PC-9 (cell line): ENCODE measurements at regions of chr6 and their contacts with region 1.

Region 1: DNA sequence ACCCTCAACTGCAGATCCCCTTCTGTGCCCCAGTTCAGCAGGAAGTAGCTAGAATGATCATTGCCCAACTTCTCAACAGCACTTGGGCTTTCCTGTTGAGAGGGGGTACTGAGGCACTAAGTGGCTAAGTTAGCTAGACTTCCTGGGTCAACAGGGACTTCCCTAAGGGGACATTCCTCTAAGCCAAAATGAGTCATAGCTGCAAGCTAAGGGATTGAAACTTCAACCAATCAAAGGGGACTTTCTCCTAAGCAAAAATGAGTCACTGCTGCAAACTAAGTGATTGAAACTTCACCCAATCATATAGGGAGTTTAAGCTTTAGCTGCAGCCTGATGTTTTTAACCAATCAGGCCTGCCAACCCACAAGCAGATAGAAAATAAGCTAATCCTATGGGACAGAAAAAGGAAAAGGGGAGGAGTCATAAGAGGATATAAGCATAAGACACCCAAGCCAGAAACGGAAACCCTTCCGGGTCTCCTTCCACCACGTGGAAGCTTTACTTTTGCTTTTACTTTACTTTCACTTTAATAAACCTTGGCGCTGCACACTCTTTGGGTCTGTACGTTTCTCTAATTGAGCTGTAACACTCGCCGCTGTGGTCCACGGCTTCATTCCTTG is 659.0 kb upstream of the HS3ST5 start:
- DNase-seq: peak in 1 of 2 experiments; percentile 59
- H3K4me3 ChIP-seq: no peak overlapping the region
- H3K27ac ChIP-seq: no peak overlapping the region
- H3K4me1 ChIP-seq: peaks cover 27% of the 10 kb centered on the region
- H3K27me3 ChIP-seq: no peaks in the 10 kb centered on the region
- CTCF ChIP-seq: no peak

Region 2: DNA sequence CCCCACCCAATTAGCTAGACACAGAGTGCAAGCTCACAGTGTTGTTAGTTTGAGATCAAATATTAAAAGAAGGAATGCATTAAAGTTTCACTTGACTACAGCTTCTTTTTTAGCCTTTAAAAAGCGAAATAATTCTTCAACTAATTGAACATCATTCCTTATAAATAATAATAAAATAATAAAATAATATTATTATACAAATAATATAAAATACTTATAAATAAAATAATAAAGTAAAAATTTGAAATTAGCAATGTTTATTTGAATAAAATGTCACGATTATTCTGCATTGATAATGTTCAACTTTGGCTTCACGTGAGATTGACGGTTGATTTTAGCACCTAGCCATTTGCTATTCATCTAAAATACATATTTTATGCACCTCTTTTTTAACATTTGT is 239.5 kb after region 1 on chr6:
- CTCF ChIA-PET with region 1: no interaction called
- POLR2A ChIA-PET with region 1: no interaction called
- intact Hi-C with region 1: no loop called
- DNase-seq: no peak
- H3K4me3 ChIP-seq: no peak overlapping the region
- H3K27ac ChIP-seq: no peak overlapping the region
- H3K4me1 ChIP-seq: no peaks in the 10 kb centered on the region
- H3K27me3 ChIP-seq: no peaks in the 10 kb centered on the region
- CTCF ChIP-seq: no peak

Region 3: GRCh38 chr6:116060572-116061283 is 1058.9 kb after region 1 on chr6 and contains the start of gene FRK:
- CTCF ChIA-PET with region 1: no interaction called
- POLR2A ChIA-PET with region 1: no interaction called
- intact Hi-C with region 1: loop called (anchors 5 kb)
- DNase-seq: peak; percentile 58 to 93
- H3K4me3 ChIP-seq: peak within 1 kb of the TSS; percentile 64
- H3K27ac ChIP-seq: peak within 1 kb of the TSS; percentile 91
- H3K4me1 ChIP-seq: peaks cover 44% of the 10 kb centered on the region
- H3K27me3 ChIP-seq: no peaks in the 10 kb centered on the region
- CTCF ChIP-seq: peak; percentile 68
- total RNA-seq, gene FRK: 14.4 and 17.2 TPM in 2 replicates